ENCODE measurements at regions of chr20 and their contacts with region 1.

Region 1: DNA sequence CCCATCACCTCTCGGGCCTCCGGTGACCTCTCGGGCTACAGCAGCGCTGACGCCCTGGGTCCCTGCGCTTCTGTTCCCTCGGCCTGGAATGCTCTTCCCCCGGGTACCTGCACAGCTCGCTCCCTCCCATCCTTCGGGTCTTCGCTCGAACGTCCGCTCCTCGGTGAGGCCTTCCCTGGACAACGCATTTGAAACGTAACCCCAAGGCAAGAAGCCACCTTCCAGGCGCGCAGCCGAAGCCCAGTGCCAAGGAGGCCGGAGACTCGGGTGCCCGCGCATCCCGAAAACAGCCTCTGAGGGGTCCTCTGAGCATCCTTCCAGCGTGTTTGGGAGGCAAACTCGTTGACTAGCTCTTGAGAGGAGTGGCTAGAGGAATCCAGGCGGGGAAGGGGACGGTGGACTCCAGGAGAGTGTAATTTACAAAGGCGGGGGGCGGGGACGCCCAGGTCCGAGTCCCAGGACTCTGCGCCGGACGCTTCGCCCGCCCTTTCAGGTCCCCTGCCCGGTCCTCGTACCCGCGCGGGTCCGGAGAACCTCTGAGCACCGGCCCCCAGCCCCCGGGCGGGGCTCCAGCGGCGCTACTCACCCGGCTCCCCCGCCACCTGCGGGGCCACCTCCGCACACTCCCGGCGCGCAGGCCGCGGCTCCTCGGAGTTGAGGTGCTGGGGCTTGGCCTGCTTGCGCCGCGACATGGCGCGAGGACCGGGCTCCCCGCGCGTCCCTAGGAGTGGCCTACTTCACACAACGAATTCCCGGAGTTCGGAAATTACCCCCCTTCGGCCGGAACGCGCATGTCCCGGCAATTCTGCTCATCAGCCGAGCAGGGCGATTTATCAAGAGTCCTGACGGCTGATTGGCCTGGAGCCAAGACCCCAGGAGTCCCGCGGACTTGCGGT is 86.8 kb downstream of the ZFP64 start:
- DNase-seq: no peak
- H3K4me3 ChIP-seq: peak overlapping the region; percentile 29 to 77 (median 54)
- H3K27ac ChIP-seq: no peak overlapping the region
- H3K4me1 ChIP-seq: no peaks in the 10 kb centered on the region
- H3K27me3 ChIP-seq: peaks cover 5 to 25% of the 10 kb centered on the region in 2 donors
- CTCF ChIP-seq: no peak
- POLR2A ChIP-seq: no peak

Region 2: GRCh38 chr20:51412333-51412871 is 692.4 kb before region 1 on chr20:
- intact Hi-C with region 1: no loop called
- DNase-seq: peak in 1 of 2 donors; percentile 42
- H3K4me3 ChIP-seq: peak overlapping the region in 1 of 3 donors; percentile 43
- H3K27ac ChIP-seq: peak overlapping the region; percentile 46 to 82
- H3K4me1 ChIP-seq: peaks cover 5 to 10% of the 10 kb centered on the region in 2 donors
- H3K27me3 ChIP-seq: no peaks in the 10 kb centered on the region
- CTCF ChIP-seq: no peak
- POLR2A ChIP-seq: no peak

Region 3: DNA sequence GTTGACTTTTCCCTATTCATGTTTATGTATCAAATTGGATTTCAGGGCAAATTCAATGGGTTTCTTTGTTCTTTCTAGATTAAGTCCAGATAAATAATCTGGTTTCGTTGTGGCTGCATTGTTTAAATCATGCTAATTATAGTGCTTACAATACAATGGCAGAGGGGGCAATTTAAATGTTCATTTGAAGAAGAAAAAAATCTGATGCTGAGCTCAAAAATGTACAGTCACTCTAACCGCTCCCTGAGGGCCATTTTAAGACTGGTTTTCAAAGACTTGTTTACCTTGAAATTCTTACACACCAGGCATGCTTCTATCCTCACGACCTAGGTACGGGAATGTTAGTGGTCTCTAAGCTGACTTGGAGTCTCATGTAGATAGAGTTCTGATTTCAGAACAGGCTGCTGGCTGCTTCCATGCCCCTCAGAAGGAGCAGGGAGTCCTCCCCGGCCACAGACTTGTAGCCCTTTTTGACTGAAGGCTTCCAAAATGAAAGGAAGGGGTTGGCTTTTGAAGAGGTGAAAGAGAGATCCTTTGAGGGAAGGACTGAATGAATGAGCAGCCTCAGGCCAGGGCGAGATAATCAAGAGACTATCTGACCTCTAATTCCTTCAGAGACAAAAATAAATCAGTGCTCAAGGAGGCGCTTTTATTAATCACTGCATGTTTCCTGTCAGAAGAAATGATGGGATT is 1574.9 kb after region 1 on chr20:
- intact Hi-C with region 1: loop called (anchors 5 kb)
- DNase-seq: no peak
- H3K4me3 ChIP-seq: no peak overlapping the region
- H3K27ac ChIP-seq: peak overlapping the region; percentile 26 to 65
- H3K4me1 ChIP-seq: no peaks in the 10 kb centered on the region
- H3K27me3 ChIP-seq: no peaks in the 10 kb centered on the region
- CTCF ChIP-seq: no peak
- POLR2A ChIP-seq: no peak

Measured in breast epithelium (tissue), 4 donors.